IMR-90 (cell line): ENCODE measurements at regions of chr10 and their contacts with region 1.

Region 1: GRCh38 chr10:29735596-29736318 is 101.0 kb upstream of the SVIL start:
- DNase-seq: peak; percentile 67
- ATAC-seq: peak; percentile 77
- H3K4me3 ChIP-seq: peak overlapping the region; percentile 81
- H3K27ac ChIP-seq: peak overlapping the region; percentile 90
- H3K4me1 ChIP-seq: peaks cover 5% of the 10 kb centered on the region
- H3K27me3 ChIP-seq: no peaks in the 10 kb centered on the region
- CTCF ChIP-seq: peak; percentile 81
- POLR2A ChIP-seq: no peak; the same call in 1 of the 2 replicates
- RAD21 ChIP-seq: peak; percentile 71

Region 2: GRCh38 chr10:29535012-29535777 is 200.6 kb before region 1 on chr10:
- CTCF ChIA-PET with region 1: no interaction called
- POLR2A ChIA-PET with region 1: no interaction called
- dilution Hi-C with region 1: no loop called
- in situ Hi-C with region 1: no loop called
- intact Hi-C with region 1: loop called (anchors 5 kb)
- DNase-seq: peak; percentile 88
- ATAC-seq: peak; percentile 97
- H3K4me3 ChIP-seq: peak overlapping the region; percentile 16; the same call in 1 of the 2 replicates
- H3K27ac ChIP-seq: peak overlapping the region; percentile 18
- H3K4me1 ChIP-seq: peaks cover 2% of the 10 kb centered on the region; the same call in 1 of the 2 replicates
- H3K27me3 ChIP-seq: no peaks in the 10 kb centered on the region
- CTCF ChIP-seq: peak; percentile 77
- POLR2A ChIP-seq: peak; percentile 40; the same call in 1 of the 2 replicates
- RAD21 ChIP-seq: peak; percentile 41

Region 3: GRCh38 chr10:29555746-29556481 is 179.8 kb before region 1 on chr10:
- CTCF ChIA-PET with region 1: no interaction called
- POLR2A ChIA-PET with region 1: no interaction called
- dilution Hi-C with region 1: no loop called
- in situ Hi-C with region 1: no loop called
- intact Hi-C with region 1: no loop called
- DNase-seq: peak; percentile 85
- ATAC-seq: peak; percentile 97
- H3K4me3 ChIP-seq: no peak overlapping the region
- H3K27ac ChIP-seq: peak overlapping the region; percentile 45
- H3K4me1 ChIP-seq: peaks cover 13% of the 10 kb centered on the region
- H3K27me3 ChIP-seq: no peaks in the 10 kb centered on the region
- CTCF ChIP-seq: no peak
- POLR2A ChIP-seq: no peak
- RAD21 ChIP-seq: no peak

Region 4: DNA sequence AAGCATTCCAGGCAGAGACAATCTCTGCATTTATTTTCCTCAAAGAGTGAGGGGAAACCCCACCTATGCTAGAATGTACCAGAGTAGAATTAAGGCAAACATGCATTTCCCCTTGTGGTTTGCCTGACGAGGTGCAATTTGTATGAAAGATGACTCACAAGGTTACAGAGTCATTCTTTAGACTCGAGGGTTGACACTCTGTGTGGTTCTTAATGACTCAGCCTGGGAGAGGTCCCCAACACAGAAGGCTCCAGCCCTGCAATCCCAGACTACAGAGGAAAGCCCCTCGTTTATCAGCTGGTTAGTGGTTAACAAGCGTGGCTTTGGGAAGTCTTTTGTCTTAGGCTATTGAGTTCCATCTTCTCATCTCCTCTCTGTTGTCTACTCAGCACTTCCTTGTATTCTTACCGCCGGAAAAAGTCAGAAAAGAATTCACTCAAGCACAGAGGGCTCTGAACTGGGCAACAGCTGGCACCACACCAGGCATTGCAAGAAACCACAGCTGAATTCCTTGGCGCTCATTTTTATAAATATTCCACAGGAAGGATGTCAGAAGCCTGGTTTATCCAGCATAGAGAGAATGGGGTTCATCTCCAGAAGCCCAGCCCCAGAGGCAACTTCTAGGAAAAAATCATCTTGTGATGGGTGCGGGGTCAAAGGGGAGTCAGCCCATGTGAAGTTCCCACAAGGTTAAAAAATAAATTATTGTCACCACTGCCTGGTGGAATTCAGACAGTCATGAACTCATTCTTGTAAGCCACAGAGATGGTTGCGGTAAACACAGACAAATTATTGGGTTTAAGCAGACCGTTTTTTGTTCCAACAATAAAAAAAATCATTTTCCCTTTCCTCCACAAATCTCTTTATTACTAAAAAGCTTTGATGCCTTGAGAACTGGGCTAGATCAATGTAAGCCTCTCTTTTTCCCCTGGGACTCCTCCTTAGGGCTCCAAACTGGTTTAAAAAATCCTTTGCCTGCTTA is 76.5 kb before region 1 on chr10:
- CTCF ChIA-PET with region 1: no interaction called
- POLR2A ChIA-PET with region 1: no interaction called
- dilution Hi-C with region 1: no loop called
- in situ Hi-C with region 1: no loop called
- intact Hi-C with region 1: loop called (anchors 1 kb)
- DNase-seq: peak; percentile 100
- ATAC-seq: peak; percentile 94
- H3K4me3 ChIP-seq: no peak overlapping the region
- H3K27ac ChIP-seq: peak overlapping the region; percentile 56
- H3K4me1 ChIP-seq: peaks cover 7% of the 10 kb centered on the region
- H3K27me3 ChIP-seq: no peaks in the 10 kb centered on the region
- CTCF ChIP-seq: peak; percentile 42; the same call in 1 of the 2 replicates
- POLR2A ChIP-seq: no peak
- RAD21 ChIP-seq: peak; percentile 1

Region 5: DNA sequence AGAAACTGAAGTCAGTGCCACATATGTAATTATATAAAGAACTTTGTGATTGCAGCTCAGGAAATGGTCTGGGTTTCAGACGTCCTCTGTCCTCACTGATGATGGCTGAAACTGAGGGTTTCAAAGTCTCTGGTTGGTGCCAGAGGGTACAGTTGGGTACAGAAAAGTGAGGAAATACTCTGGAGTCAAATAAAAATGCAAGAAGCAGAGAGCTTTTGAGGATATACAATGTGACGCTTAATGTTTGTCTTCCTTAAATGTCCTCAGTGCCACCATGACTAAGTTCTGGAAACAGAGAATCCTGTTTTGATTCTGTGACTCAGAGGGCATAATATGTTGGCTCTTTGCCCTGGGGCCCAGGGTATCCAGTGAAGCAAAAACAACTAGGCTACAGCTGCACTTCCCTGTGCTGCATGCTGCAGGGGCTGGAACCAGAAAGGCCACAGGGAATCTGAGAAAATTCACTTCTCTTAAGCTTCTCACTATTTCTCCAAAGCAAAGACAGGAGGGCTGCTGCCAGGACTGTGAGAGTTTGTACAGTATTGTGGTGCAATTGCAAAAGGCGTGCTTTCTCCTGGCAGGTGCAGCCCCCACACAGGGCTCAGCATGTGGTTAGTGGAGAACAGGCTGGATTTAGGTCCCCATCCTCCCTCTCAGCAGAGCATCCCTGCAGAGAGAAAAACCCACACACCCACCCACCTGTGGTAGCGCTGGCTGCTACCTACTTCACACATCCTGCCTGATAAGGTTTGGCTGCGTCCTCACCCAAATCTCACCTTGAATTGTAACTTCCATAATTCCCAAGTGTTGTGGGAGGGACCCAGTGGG is 68.5 kb after region 1 on chr10:
- CTCF ChIA-PET with region 1: interaction called, 3 read pairs
- POLR2A ChIA-PET with region 1: interaction called, 3 read pairs
- dilution Hi-C with region 1: no loop called
- in situ Hi-C with region 1: no loop called
- intact Hi-C with region 1: loop called (anchors 2 kb)
- DNase-seq: peak; percentile 95
- ATAC-seq: peak; percentile 61
- H3K4me3 ChIP-seq: no peak overlapping the region
- H3K27ac ChIP-seq: peak overlapping the region; percentile 87
- H3K4me1 ChIP-seq: peaks cover 31% of the 10 kb centered on the region
- H3K27me3 ChIP-seq: no peaks in the 10 kb centered on the region
- CTCF ChIP-seq: no peak
- POLR2A ChIP-seq: 0 out of 2 replicates have a peak, but pooled peaks have one; percentile 15
- RAD21 ChIP-seq: no peak

Region 6: DNA sequence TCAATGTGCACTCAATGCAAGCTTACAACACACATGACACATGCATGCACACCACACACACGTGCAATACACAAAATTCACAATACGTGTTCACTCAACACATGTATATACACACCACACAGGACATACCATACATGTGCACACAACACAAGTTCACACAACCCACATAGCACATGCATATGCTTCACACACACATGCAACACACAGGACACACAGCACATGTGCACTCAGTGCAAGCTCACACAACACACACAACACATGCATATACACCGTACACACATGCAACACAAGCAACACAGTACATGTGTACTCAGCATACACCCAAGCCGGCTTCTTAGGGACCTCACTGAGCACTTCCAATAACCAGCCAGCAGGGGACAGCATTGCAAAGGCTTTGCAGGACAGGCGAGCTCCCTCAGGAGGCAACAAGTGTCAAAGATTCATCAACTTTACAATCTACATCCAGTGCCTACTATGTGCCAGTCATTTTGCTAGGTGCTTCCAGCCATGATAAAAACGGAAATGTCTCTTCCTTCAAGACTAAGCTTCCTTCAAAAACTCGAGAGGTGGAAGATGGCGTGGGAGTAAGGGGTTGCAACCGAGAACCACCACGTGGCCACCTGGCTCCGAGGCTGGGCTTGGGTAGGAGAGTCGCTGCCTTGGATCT is 262.5 kb after region 1 on chr10:
- CTCF ChIA-PET with region 1: no interaction called
- POLR2A ChIA-PET with region 1: no interaction called
- dilution Hi-C with region 1: no loop called
- in situ Hi-C with region 1: no loop called
- intact Hi-C with region 1: loop called (anchors 5 kb)
- DNase-seq: peak; percentile 82
- ATAC-seq: peak; percentile 78
- H3K4me3 ChIP-seq: no peak overlapping the region
- H3K27ac ChIP-seq: no peak overlapping the region
- H3K4me1 ChIP-seq: peaks cover 21% of the 10 kb centered on the region
- H3K27me3 ChIP-seq: peaks cover 4% of the 10 kb centered on the region
- CTCF ChIP-seq: peak; percentile 99
- POLR2A ChIP-seq: 0 out of 2 replicates have a peak, but pooled peaks have one; percentile 29
- RAD21 ChIP-seq: peak; percentile 100

Region 7: GRCh38 chr10:30151581-30152389 is 416.0 kb after region 1 on chr10:
- CTCF ChIA-PET with region 1: no interaction called
- POLR2A ChIA-PET with region 1: no interaction called
- dilution Hi-C with region 1: no loop called
- in situ Hi-C with region 1: no loop called
- intact Hi-C with region 1: no loop called
- DNase-seq: peak; percentile 88
- ATAC-seq: peak; percentile 100
- H3K4me3 ChIP-seq: no peak overlapping the region
- H3K27ac ChIP-seq: no peak overlapping the region
- H3K4me1 ChIP-seq: peaks cover 4% of the 10 kb centered on the region; the same call in 1 of the 2 replicates
- H3K27me3 ChIP-seq: no peaks in the 10 kb centered on the region; the same call in 1 of the 2 replicates
- CTCF ChIP-seq: peak; percentile 14; the same call in 1 of the 2 replicates
- POLR2A ChIP-seq: no peak
- RAD21 ChIP-seq: peak; percentile 33; the same call in 1 of the 2 replicates